ENCODE measurements at regions of chr2 and their contacts with region 1.

Region 1: DNA sequence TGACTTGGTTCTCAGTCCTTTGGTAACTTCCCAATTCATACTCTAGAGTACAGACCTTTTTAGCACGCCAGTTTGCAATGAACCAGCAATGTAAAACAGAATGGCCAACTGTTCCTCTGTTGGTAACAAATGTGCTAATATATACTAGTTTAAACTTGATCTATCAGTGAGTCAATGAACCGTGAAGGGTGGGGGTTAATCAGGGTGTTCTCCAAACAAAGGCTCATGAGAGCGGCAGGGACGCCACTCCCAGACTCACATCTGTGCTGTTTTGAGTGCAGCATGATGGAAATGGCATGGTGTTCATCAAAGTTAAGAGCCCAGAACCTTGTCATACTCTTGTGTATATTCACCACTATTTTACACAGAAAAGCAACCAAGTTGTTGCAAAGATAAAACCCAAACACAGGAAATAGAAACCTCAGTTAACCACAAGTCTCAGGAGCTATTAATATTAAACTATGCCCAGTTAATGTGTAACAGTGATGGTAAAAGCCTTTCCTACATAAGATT is 70.3 kb downstream of the CERKL start:
- ATAC-seq: peak in 6 of 8 experiments; percentile 63 to 100 (median 95)
- H3K4me3 ChIP-seq: no peak overlapping the region
- H3K27ac ChIP-seq: no peak overlapping the region
- H3K4me1 ChIP-seq: peaks cover 7 to 20% of the 10 kb centered on the region in 2 donors

Region 2: DNA sequence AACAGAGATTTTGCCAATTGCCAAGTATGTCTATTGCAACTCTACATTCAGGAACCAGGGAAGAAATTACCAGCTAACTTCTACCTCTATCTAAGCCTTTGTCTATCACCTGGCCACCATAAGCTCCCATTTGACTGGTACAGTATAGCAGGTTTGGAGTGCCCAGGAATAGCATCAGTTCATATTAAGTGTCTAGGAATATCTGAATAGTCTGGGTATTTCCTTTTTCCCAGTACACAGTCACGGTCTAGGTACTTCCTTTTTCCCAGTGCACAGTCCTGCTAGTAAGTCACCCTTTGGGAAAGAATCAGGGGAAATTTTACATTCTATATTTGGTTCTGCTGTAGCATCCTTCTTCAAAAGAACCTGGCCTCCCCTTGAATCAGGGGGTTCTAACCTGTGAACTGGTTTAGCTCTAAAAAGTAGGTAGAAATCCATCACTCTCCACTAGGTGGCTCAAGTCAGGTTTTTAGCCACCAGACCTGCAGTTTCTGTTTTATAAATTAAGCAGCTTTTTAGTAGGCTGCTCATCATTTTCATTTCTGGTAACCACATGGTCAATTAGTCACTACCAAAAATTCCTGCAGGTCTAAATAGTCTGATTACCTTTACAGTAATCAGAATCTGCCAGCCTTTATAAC is 1080.2 kb after region 1 on chr2:
- in situ Hi-C with region 1: loop called in 1 of 9 experiments (anchors 25 kb)
- ATAC-seq: peak in 3 of 8 experiments; percentile 50 to 61 (median 57)
- H3K4me3 ChIP-seq: no peak overlapping the region
- H3K27ac ChIP-seq: no peak overlapping the region
- H3K4me1 ChIP-seq: no peaks in the 10 kb centered on the region

Measured in motor neuron (in vitro differentiated cells).